BJ (cell line): ENCODE measurements at regions of chr3 and their contacts with region 1.

Region 1: GRCh38 chr3:42746455-42747450 is 26.3 kb downstream of the CCDC13 start:
- DNase-seq: peak; percentile 9
- H3K4me3 ChIP-seq: no peak overlapping the region
- H3K27me3 ChIP-seq: no peaks in the 10 kb centered on the region
- CTCF ChIP-seq: no peak

Region 2: GRCh38 chr3:42735019-42735418 is 11.7 kb before region 1 on chr3:
- CTCF ChIA-PET with region 1: interaction called, 17 read pairs
- POLR2A ChIA-PET with region 1: no interaction called
- DNase-seq: no peak
- H3K4me3 ChIP-seq: no peak overlapping the region
- H3K27me3 ChIP-seq: no peaks in the 10 kb centered on the region
- CTCF ChIP-seq: no peak

Region 3: DNA sequence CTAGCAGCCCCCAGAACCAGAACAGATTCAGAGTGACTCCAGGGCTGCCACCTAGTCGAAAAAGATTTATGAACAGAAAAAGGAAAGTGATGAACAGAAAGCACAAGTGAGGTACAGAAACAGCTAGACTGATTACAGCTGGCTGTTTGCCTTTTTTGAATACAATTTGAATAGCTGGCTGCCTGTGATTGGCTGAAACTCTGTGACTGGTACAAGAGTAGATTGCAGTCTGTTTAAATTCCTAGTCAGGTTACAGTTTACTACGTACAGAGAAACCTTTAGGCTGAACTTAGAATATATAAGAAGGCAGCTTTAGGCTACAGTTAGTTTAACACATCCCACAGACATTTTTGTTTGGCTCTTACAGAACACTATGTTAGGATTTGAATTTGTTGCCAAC is 16.3 kb after region 1 on chr3:
- CTCF ChIA-PET with region 1: interaction called, 10 read pairs
- POLR2A ChIA-PET with region 1: no interaction called
- DNase-seq: no peak
- H3K4me3 ChIP-seq: no peak overlapping the region
- H3K27me3 ChIP-seq: peaks cover 11% of the 10 kb centered on the region; the same call in 1 of the 2 replicates
- CTCF ChIP-seq: no peak